ENCODE measurements at regions of chr11 and their contacts with region 1.

Region 1: DNA sequence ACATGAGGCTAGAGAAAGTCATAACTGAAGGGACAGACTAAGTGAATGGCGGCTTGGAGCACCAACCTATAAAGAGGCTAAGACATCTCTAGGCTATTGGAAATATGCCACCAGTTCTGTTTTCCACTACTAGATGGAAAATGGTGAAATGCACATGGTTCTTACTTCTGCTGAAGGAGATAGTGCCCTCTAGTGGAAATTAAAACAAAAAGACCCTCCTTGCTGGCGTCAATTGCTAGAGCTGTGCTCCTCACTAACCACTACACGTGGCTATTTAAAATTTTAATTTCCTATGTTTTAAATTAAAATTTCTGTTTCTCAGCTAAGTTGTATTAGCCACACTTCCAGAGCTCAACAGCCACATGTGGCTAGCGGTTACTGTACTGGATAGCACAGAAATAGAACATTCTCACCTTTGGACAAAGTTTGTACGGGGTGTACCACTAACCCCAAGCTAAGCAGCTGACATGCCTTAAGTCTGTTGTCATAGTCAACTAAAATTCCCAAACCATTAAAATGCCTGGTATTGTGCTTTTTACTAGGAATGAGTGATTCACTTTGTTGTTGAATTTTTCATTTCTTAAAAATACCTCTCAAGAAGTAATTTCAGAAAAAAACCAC is 34.1 kb upstream of the CALCA start:
- DNase-seq: peak in 7 of 9 donors; percentile 7 to 46 (median 34)
- ATAC-seq: peak; percentile 64
- H3K4me3 ChIP-seq: no peak overlapping the region
- H3K4me3 Mint-ChIP-seq: no peak overlapping the region
- H3K27ac ChIP-seq: no peak overlapping the region
- H3K27ac Mint-ChIP-seq: no peak overlapping the region
- H3K4me1 ChIP-seq: no peaks in the 10 kb centered on the region
- H3K4me1 Mint-ChIP-seq: no peaks in the 10 kb centered on the region
- H3K27me3 ChIP-seq: no peaks in the 10 kb centered on the region
- H3K27me3 Mint-ChIP-seq: peaks cover 18 to 76% (median 36%) of the 10 kb centered on the region in 5 donors

Region 2: DNA sequence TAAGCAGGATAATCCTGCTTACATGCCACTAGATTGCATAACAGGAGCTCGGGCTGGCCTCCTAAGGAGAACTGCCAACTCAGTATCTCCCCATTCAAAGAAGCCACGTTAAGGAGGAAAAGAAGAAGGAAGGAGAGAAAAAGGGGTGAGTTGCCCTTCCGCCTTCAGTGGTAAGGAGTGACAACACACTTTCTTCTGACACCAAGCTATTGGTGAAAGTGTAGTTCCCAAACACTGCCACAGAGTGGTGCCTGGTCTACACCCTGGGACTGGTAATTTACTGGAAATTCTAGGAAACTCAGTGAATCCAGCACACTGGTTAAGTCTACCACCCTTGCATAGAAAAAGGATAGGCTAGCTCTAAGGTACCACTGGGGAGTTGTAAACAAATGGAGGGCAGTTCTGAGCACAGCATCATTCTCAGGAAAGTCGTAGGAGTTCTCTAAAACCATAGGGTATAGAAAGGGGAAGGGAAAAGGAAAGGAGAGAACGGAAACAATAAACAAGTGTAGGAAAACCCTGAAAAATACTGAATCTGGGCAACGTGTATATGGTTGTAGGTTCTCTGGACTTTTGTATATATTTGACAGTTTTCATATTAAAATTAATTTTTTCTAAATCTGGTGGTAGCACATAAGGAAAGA is 705.5 kb before region 1 on chr11:
- CTCF ChIA-PET with region 1: no interaction called
- POLR2A ChIA-PET with region 1: no interaction called
- intact Hi-C with region 1: loop called in 1 of 2 experiments (anchors 1 kb)
- DNase-seq: peak in 7 of 9 donors; percentile 19 to 47 (median 26)
- ATAC-seq: peak; percentile 88
- H3K4me3 ChIP-seq: no peak overlapping the region
- H3K4me3 Mint-ChIP-seq: no peak overlapping the region
- H3K27ac ChIP-seq: no peak overlapping the region
- H3K27ac Mint-ChIP-seq: no peak overlapping the region
- H3K4me1 ChIP-seq: no peaks in the 10 kb centered on the region
- H3K4me1 Mint-ChIP-seq: peaks cover 0 to 35% (median 0%) of the 10 kb centered on the region in 7 donors
- H3K27me3 ChIP-seq: no peaks in the 10 kb centered on the region
- H3K27me3 Mint-ChIP-seq: no peaks in the 10 kb centered on the region

Region 3: DNA sequence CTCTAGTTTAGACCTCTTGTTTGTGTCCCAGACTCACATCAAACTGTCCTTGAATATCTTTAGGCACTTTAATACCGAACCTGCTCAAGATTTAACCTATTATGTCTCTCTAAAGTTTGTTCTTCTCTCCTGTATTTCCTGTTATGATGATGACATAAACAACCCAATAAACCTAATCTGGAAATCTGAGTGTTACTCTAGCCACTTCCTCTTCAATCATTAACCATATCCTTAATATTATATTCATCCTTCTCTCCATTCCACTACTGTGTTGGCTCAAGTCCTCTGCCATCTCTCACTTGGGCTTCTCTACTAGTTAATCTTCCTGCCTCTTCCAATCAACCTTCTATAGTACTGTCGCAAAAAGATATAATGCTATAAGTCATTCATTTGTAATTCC is 542.6 kb before region 1 on chr11:
- CTCF ChIA-PET with region 1: no interaction called
- POLR2A ChIA-PET with region 1: no interaction called
- intact Hi-C with region 1: loop called in 1 of 2 experiments (anchors 10 kb)
- DNase-seq: no peak
- ATAC-seq: no peak
- H3K4me3 ChIP-seq: no peak overlapping the region
- H3K4me3 Mint-ChIP-seq: no peak overlapping the region
- H3K27ac ChIP-seq: peak overlapping the region; percentile 25
- H3K27ac Mint-ChIP-seq: no peak overlapping the region
- H3K4me1 ChIP-seq: peaks cover 3 to 17% of the 10 kb centered on the region in 2 donors
- H3K4me1 Mint-ChIP-seq: peaks cover 2 to 15% (median 8%) of the 10 kb centered on the region in 7 donors
- H3K27me3 ChIP-seq: no peaks in the 10 kb centered on the region
- H3K27me3 Mint-ChIP-seq: no peaks in the 10 kb centered on the region

Region 4: GRCh38 chr11:14789879-14790484 is 216.3 kb before region 1 on chr11:
- CTCF ChIA-PET with region 1: no interaction called
- POLR2A ChIA-PET with region 1: no interaction called
- intact Hi-C with region 1: loop called in 1 of 2 experiments (anchors 5 kb)
- DNase-seq: peak in 4 of 9 donors; percentile 19 to 37 (median 36)
- ATAC-seq: peak; percentile 42
- H3K4me3 ChIP-seq: no peak overlapping the region
- H3K4me3 Mint-ChIP-seq: no peak overlapping the region
- H3K27ac ChIP-seq: no peak overlapping the region
- H3K27ac Mint-ChIP-seq: peak overlapping the region in 7 of 9 donors; percentile 2 to 74 (median 51)
- H3K4me1 ChIP-seq: no peaks in the 10 kb centered on the region
- H3K4me1 Mint-ChIP-seq: peaks cover 4 to 39% (median 17%) of the 10 kb centered on the region in 7 donors
- H3K27me3 ChIP-seq: no peaks in the 10 kb centered on the region
- H3K27me3 Mint-ChIP-seq: no peaks in the 10 kb centered on the region

Region 5: DNA sequence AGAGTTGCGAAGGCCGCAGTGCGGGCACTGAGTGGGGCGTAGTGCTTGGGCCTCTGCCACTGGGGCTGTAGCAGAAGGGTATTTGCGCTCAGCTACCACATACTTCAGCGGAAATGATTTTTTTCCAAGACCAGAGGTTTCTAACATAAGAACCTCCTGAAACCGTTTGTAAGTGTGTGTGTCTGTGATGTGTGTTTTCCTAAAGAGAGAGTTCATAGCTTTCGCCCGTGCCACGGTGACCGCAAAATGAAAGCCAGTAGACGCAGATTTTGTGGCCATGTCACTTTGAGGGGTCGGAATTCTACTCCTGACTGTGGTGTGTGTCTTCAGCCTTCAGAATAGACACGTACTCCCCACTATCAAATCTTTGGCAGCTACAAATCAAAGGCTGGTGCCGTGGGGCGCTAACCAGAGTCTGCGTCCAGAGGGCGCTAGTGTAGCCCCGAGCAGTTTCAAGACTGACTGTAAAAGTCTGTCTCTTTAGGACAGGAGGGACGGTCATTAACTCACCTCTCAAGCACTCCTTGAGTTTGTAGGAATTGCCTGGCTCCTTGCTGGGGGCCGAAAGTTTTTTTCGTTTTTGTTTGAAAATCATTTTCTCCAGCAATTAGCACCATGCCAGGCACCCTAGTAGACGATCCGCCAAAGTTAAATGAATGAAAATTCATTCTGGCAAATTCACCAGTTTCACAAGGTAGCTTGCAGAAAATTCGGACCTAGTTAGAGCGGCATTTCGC is 31.6 kb before region 1 on chr11:
- CTCF ChIA-PET with region 1: no interaction called
- POLR2A ChIA-PET with region 1: no interaction called
- intact Hi-C with region 1: loop called in 1 of 2 experiments (anchors 2 kb)
- DNase-seq: peak; percentile 22 to 51 (median 47)
- ATAC-seq: peak; percentile 80
- H3K4me3 ChIP-seq: peak overlapping the region; percentile 47
- H3K4me3 Mint-ChIP-seq: peak overlapping the region; percentile 76 to 92 (median 83)
- H3K27ac ChIP-seq: no peak overlapping the region
- H3K27ac Mint-ChIP-seq: no peak overlapping the region
- H3K4me1 ChIP-seq: peaks cover 11 to 16% of the 10 kb centered on the region in 2 donors
- H3K4me1 Mint-ChIP-seq: peaks cover 20 to 38% (median 32%) of the 10 kb centered on the region in 7 donors
- H3K27me3 ChIP-seq: peaks cover 10 to 25% of the 10 kb centered on the region in 2 donors
- H3K27me3 Mint-ChIP-seq: peaks cover 66 to 89% (median 76%) of the 10 kb centered on the region in 5 donors

Measured in naive thymus-derived CD4-positive, alpha-beta T cell (primary cell).